Ascending aorta (tissue), 2 donors: ENCODE measurements at regions of chr18 and their contacts with region 1.

Region 1: GRCh38 chr18:58671111-58671631 is at the start of gene MALT1:
- DNase-seq: peak; percentile 61 to 96
- H3K4me3 ChIP-seq: peak within 1 kb of the TSS; percentile 91 to 95
- H3K27ac ChIP-seq: peak within 1 kb of the TSS; percentile 75 to 93
- H3K4me1 ChIP-seq: peaks cover 0 to 7% of the 10 kb centered on the region in 2 donors
- H3K27me3 ChIP-seq: no peaks in the 10 kb centered on the region
- CTCF ChIP-seq: no peak
- total RNA-seq, gene MALT1: 14.5 TPM

Region 2: GRCh38 chr18:58378411-58379379 is 292.5 kb before region 1 on chr18:
- intact Hi-C with region 1: no loop called
- DNase-seq: no peak
- H3K4me3 ChIP-seq: no peak overlapping the region
- H3K27ac ChIP-seq: no peak overlapping the region
- H3K4me1 ChIP-seq: no peaks in the 10 kb centered on the region
- H3K27me3 ChIP-seq: no peaks in the 10 kb centered on the region
- CTCF ChIP-seq: no peak

Region 3: GRCh38 chr18:58567453-58568196 is 103.5 kb before region 1 on chr18:
- intact Hi-C with region 1: no loop called
- DNase-seq: no peak
- H3K4me3 ChIP-seq: no peak overlapping the region
- H3K27ac ChIP-seq: no peak overlapping the region
- H3K4me1 ChIP-seq: no peaks in the 10 kb centered on the region
- H3K27me3 ChIP-seq: no peaks in the 10 kb centered on the region
- CTCF ChIP-seq: no peak

Region 4: DNA sequence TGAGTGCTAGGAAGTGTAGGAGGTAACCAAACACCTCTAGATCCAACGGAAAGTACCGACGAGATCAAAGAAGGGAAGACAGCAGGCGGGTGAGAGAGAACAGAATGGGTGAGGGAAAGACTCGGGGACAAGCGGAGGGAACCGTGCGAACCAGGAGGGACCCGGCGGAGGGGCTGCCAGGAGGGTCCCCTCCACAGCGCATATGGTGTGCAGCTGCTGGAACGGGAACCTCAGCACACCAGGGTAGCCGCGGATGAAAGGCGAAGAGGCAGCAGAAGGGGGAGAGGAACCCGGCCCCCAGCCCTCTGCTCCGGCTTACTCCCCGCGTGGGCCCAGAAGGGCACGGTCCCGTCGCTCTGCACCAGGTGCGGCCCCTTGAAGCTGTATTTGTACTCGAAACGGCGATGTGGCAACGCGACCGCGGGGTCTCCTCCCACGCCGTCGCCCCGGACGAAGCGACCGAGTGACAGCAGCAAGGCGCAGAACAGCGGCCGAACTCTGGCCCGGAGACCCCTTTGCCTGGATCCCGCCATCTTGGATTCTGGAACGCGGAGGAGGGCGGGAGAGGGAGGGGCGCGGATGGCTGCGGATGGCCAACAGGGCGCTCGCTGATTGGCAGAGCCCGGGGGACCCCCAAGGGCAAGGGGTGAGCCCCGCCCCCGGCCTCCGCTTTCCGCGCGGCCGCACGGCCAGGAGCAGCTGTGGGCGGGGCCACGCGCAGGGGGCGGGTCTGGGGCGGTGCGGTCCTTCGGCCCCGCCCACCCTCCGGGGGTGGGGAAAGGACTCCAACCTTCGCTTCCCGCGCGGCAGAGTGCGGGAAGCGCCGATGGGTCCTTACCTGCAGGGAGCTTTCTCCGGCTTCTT is 687.8 kb after region 1 on chr18 and contains the start of gene LMAN1:
- intact Hi-C with region 1: loop called (anchors 5 kb)
- DNase-seq: peak; percentile 82 to 97
- H3K4me3 ChIP-seq: peak within 1 kb of the TSS; percentile 67 to 72
- H3K27ac ChIP-seq: peak within 1 kb of the TSS; percentile 73 to 79
- H3K4me1 ChIP-seq: peaks cover 0 to 5% of the 10 kb centered on the region in 2 donors
- H3K27me3 ChIP-seq: no peaks in the 10 kb centered on the region
- CTCF ChIP-seq: no peak
- total RNA-seq, gene LMAN1: 60.8 TPM